Activated CD4-positive, alpha-beta T cell treated with anti-CD3 and anti-CD28 coated beads for 36 hours (primary cell): ENCODE measurements at regions of chr15 and their contacts with region 1.

Region 1: GRCh38 chr15:101201406-101202174 is 50.3 kb downstream of the CHSY1 start:
- DNase-seq: peak; percentile 61
- ATAC-seq: no peak
- H3K4me3 Mint-ChIP-seq: no peak overlapping the region
- H3K27ac Mint-ChIP-seq: peak overlapping the region; percentile 94
- H3K4me1 Mint-ChIP-seq: peaks cover 89% of the 10 kb centered on the region
- H3K27me3 Mint-ChIP-seq: no peaks in the 10 kb centered on the region

Region 2: GRCh38 chr15:100596792-100597191 is 604.8 kb before region 1 on chr15:
- CTCF ChIA-PET with region 1: no interaction called
- POLR2A ChIA-PET with region 1: no interaction called
- intact Hi-C with region 1: loop called (anchors 2 to 5 kb)
- DNase-seq: peak; percentile 96
- ATAC-seq: peak; percentile 82
- H3K4me3 Mint-ChIP-seq: peak overlapping the region; percentile 74
- H3K27ac Mint-ChIP-seq: peak overlapping the region; percentile 98
- H3K4me1 Mint-ChIP-seq: peaks cover 74% of the 10 kb centered on the region
- H3K27me3 Mint-ChIP-seq: no peaks in the 10 kb centered on the region

Region 3: DNA sequence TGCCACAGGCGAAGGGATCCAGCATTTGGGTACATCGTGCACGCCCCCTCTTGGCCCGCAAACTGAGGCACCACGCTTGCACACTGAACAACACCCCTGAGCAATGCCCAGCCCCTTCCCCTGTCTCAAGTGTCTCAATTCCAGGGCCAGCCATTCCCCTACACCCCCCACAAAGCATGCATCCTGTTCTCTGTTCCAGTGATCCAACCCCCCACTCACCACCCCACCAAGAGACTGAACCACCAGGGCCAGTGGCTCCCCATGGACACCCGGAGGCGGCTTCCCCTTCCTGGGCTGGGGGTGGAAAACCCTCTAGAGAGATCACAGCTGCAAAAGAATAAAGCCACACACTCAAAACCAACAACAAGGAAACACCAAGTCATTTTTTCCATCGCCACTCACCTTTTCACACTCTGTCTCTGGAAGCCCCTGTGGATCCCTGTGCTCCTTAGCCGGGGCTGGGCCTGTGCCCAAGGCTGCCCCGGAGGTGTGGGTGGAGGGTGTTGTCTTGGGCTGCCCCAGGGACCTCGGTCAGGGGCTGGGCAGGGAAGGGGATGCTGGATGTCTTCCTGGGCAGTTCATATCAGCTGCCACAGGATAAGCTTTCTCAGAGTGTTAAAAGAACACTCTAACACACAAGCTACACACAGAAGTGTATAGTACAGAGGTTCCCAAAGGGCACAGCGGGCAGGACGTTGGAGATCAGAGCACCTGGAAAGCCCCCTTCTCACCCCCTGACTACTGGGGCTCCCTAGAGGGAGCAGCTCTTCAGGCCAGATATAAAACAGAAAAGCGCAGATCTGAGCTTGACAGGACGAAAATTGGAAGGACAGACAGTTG is 42.3 kb before region 1 on chr15:
- CTCF ChIA-PET with region 1: no interaction called
- POLR2A ChIA-PET with region 1: no interaction called
- intact Hi-C with region 1: loop called (anchors 1 kb)
- DNase-seq: peak; percentile 71
- ATAC-seq: peak; percentile 81
- H3K4me3 Mint-ChIP-seq: peak overlapping the region; percentile 1
- H3K27ac Mint-ChIP-seq: peak overlapping the region; percentile 34
- H3K4me1 Mint-ChIP-seq: peaks cover 39% of the 10 kb centered on the region
- H3K27me3 Mint-ChIP-seq: no peaks in the 10 kb centered on the region

Region 4: DNA sequence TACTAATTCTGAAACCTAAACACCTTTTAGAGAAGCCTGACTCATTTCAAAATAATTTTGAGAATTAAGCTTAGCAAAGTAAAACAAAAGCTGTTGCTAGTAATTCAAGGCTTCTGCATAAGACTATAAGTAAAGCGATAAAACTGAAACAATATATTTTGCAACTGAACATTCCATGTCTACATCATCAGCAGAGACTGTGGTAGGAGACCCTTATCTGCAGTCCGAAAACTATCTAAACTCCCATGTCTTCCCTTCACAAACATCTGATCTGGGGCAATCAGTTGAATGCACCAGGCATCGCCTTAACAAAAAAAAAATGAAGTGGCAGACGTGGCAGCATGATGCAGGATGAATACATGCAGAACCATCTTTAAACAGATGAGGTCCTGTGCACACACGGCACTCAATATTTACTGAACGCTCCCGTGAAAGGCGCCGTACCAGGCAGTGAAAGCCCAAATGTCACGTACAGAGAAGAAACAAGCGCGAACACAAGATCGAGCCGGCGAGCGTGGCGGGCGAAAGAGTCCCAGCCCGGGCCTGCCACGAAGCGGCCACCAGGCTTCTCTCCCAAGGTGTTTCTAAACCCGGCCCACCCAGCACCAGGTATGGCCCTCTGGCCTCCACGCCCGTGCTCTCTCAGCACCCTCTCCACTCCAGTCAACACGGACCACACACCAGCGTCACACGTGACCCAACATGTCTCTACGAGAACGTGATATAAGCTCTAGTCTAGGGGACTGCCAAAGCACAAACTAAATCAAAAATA is 12.8 kb before region 1 on chr15:
- CTCF ChIA-PET with region 1: interaction called, 18 read pairs
- POLR2A ChIA-PET with region 1: interaction called, 14 read pairs
- intact Hi-C with region 1: loop called (anchors 1 kb)
- DNase-seq: no peak
- ATAC-seq: peak; percentile 70
- H3K4me3 Mint-ChIP-seq: peak overlapping the region; percentile 40
- H3K27ac Mint-ChIP-seq: peak overlapping the region; percentile 84
- H3K4me1 Mint-ChIP-seq: peaks cover 85% of the 10 kb centered on the region
- H3K27me3 Mint-ChIP-seq: no peaks in the 10 kb centered on the region

Region 5: GRCh38 chr15:101251830-101252820 is 50.5 kb after region 1 on chr15 and contains the start of gene CHSY1:
- CTCF ChIA-PET with region 1: interaction called, 6 read pairs
- POLR2A ChIA-PET with region 1: interaction called, 13 read pairs
- intact Hi-C with region 1: no loop called
- DNase-seq: peak; percentile 91
- ATAC-seq: peak; percentile 61
- H3K4me3 Mint-ChIP-seq: peak within 1 kb of the TSS; percentile 85
- H3K27ac Mint-ChIP-seq: peak within 1 kb of the TSS; percentile 87
- H3K4me1 Mint-ChIP-seq: peaks cover 58% of the 10 kb centered on the region
- H3K27me3 Mint-ChIP-seq: no peaks in the 10 kb centered on the region
- total RNA-seq, gene CHSY1: 31.5 to 36.1 TPM